Naive thymus-derived CD4-positive, alpha-beta T cell (primary cell): ENCODE measurements at regions of chr7 and their contacts with region 1.

Region 1: DNA sequence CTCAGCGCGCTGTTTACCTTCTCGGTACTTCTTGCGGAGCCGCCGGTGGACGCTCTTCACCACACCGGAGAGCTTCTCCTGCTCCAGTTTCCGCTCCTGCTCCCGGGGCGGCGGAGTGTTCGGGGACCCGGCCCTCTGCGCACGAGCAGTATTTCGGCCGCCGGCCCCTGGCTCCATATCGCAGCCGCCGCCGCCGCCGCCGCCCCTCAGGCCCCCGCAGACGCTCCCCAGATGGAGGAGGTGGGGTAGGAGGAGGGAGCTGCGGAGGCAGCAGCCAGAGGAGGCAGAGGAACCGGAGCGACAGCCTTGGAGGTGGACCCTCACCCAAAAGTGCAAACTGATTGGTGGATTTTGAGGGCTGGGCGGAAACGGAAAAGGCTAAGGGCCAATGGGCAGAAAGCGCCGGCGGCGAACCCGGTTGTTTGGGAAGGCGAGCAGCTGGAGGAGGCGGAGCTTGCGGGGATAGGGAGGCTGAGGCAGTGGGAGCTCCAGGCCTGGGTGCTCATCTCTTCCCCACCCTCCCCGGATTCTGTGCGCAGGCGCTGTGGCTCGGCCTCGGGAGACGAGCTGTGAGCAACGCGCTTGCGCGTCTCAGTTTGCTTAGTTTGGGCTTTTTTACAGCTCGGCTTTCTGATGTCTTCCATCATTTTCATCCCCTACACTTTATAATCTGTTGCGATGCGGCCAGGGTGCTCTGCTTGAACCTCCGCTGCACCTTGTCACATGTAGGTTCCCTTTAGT is 146.9 kb downstream of the GPR85 start:
- DNase-seq: peak; percentile 97 to 100 (median 99)
- ATAC-seq: peak; percentile 98
- H3K4me3 ChIP-seq: peak overlapping the region; percentile 84
- H3K4me3 Mint-ChIP-seq: peak overlapping the region; percentile 88 to 97 (median 95)
- H3K27ac ChIP-seq: peak overlapping the region; percentile 76
- H3K27ac Mint-ChIP-seq: peak overlapping the region; percentile 89 to 97 (median 94)
- H3K4me1 ChIP-seq: peaks cover 19 to 29% of the 10 kb centered on the region in 2 donors
- H3K4me1 Mint-ChIP-seq: peaks cover 22 to 57% (median 52%) of the 10 kb centered on the region in 7 donors
- H3K27me3 ChIP-seq: no peaks in the 10 kb centered on the region
- H3K27me3 Mint-ChIP-seq: peaks cover 0 to 4% (median 0%) of the 10 kb centered on the region in 5 donors

Region 2: DNA sequence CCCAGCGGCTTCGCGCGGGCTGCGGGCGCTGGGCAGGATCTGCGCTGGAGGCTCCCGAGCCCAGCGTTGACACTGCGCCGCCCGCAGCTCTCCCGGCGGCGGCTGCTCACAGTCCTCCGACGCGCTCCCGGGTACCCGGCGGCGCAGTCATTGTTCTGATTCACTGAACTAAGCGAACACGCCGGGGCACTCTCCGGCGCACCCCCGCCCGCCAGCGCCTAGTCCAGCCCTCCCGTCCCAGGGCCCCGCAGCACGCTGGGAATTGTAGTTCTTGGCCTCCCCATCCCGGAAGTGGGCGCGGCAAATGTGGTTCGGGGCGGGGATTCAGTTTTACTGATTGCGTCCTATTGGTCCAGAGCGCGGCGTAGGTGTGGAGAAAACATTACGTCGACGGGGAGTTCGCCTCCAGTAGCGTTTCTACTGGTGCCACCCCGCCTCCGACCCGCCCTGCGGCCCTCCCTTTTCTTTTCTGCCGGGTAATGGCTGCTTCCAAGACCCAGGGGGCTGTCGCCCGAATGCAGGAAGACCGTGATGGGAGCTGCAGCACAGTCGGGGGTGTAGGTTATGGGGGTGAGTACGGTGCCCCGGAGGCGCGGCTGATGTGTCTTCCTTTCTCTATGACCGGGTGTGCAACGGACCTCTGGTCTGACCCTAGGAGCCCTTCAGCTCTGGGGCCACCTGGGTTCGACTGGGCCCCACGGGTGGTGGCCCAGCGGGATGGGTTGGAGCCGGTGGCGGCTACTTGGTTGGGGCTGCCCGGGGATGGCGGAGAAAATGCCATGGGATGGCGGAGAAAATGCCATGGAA is 733.3 kb before region 1 on chr7 and contains the starts of genes DOCK4 and ZNF277:
- CTCF ChIA-PET with region 1: no interaction called
- POLR2A ChIA-PET with region 1: no interaction called
- intact Hi-C with region 1: loop called (anchors 1 kb)
- DNase-seq: peak; percentile 97 to 100 (median 99)
- ATAC-seq: peak; percentile 93
- H3K4me3 ChIP-seq: peak within 1 kb of the TSS; percentile 94
- H3K4me3 Mint-ChIP-seq: peak within 1 kb of the TSS; percentile 93 to 99 (median 96)
- H3K27ac ChIP-seq: peak within 1 kb of the TSS; percentile 71
- H3K27ac Mint-ChIP-seq: peak within 1 kb of the TSS; percentile 60 to 95 (median 85)
- H3K4me1 ChIP-seq: peaks cover 14 to 22% of the 10 kb centered on the region in 2 donors
- H3K4me1 Mint-ChIP-seq: peaks cover 25 to 57% (median 39%) of the 10 kb centered on the region in 7 donors
- H3K27me3 ChIP-seq: peaks cover 15% of the 10 kb centered on the region in 2 donors
- H3K27me3 Mint-ChIP-seq: peaks cover 25 to 36% (median 29%) of the 10 kb centered on the region in 5 donors
- total RNA-seq, gene DOCK4: 0.19 to 3.1 (median 2.4) TPM
- total RNA-seq, gene ZNF277: 19.5 to 38.8 (median 25.9) TPM

Region 3: GRCh38 chr7:112390167-112390566 is 549.6 kb before region 1 on chr7:
- CTCF ChIA-PET with region 1: no interaction called
- POLR2A ChIA-PET with region 1: no interaction called
- intact Hi-C with region 1: loop called in 1 of 2 experiments (anchors 5 kb)
- DNase-seq: no peak
- ATAC-seq: no peak
- H3K4me3 ChIP-seq: no peak overlapping the region
- H3K4me3 Mint-ChIP-seq: peak overlapping the region in 7 of 10 donors; percentile 23 to 87 (median 86)
- H3K27ac ChIP-seq: no peak overlapping the region
- H3K27ac Mint-ChIP-seq: peak overlapping the region in 2 of 9 donors; percentile 57 to 95
- H3K4me1 ChIP-seq: peaks cover 0 to 8% of the 10 kb centered on the region in 2 donors
- H3K4me1 Mint-ChIP-seq: peaks cover 9 to 28% (median 15%) of the 10 kb centered on the region in 7 donors
- H3K27me3 ChIP-seq: no peaks in the 10 kb centered on the region
- H3K27me3 Mint-ChIP-seq: peaks cover 0 to 39% (median 0%) of the 10 kb centered on the region in 5 donors

Region 4: DNA sequence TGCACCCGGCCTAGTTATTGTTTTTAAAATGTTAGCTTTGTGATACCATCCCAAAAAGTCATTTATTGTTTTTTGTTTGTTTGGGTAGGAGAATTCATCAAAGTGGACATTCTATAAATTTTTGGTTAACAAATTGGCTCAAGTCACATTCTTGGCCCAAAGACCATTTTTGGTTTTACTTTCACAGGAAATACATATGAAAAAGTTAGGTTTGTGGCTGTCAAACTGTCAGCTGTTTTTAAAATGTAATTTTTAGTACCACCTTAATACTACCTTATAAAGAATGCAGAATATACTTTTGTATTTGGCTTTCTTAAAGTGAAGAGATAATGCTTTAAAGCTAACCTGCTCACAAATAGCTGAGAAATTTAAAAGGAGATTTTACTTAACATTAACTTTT is 174.6 kb before region 1 on chr7:
- CTCF ChIA-PET with region 1: no interaction called
- POLR2A ChIA-PET with region 1: no interaction called
- intact Hi-C with region 1: loop called in 1 of 2 experiments (anchors 5 kb)
- DNase-seq: no peak
- ATAC-seq: no peak
- H3K4me3 ChIP-seq: no peak overlapping the region
- H3K4me3 Mint-ChIP-seq: no peak overlapping the region
- H3K27ac ChIP-seq: no peak overlapping the region
- H3K27ac Mint-ChIP-seq: no peak overlapping the region
- H3K4me1 ChIP-seq: peaks cover 0 to 3% of the 10 kb centered on the region in 2 donors
- H3K4me1 Mint-ChIP-seq: peaks cover 0 to 26% (median 18%) of the 10 kb centered on the region in 7 donors
- H3K27me3 ChIP-seq: no peaks in the 10 kb centered on the region
- H3K27me3 Mint-ChIP-seq: no peaks in the 10 kb centered on the region

Region 5: DNA sequence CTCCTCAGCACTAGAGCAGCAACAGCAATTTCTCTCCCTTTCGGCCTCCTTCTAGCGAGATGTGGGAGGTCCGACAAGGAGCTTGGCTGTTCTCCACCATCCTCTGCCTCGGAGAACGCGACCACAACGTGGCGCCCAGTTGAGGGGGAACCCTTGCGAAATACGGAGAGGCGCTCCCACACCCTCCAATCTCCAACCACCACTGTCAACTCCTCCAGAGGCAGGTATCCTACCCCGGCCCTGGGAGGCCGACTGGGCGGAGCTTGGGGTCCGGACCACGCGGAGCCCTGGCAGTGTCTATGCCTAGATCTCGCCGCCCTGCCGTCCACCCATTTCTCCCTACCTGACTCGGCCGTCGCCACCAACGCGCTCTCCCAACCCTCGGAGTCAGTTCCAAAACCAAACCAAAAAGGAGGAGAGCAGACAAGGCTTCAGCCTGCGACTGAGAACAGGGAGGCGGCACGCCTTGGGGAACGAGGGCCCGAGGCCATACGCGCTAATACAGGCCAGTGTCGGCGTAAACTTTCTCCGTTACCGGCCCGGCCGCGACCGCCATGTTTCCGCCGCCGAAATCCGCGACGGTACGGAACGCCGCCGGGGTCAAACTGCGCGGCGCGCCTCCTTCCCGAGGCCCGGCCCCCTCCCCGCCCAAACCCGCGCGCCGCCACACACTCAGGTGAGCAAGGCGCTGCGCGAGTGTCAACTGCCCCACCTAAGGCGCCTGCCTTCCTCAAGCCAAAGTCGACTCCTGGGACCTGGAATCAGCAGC is 149.7 kb before region 1 on chr7 and contains the start of gene TMEM168:
- CTCF ChIA-PET with region 1: no interaction called
- POLR2A ChIA-PET with region 1: interaction called, 9 read pairs
- intact Hi-C with region 1: loop called (anchors 1 kb)
- DNase-seq: peak; percentile 75 to 91 (median 83)
- ATAC-seq: peak; percentile 94
- H3K4me3 ChIP-seq: peak within 1 kb of the TSS; percentile 98
- H3K4me3 Mint-ChIP-seq: peak within 1 kb of the TSS; percentile 90 to 97 (median 95)
- H3K27ac ChIP-seq: peak within 1 kb of the TSS; percentile 85
- H3K27ac Mint-ChIP-seq: peak within 1 kb of the TSS; percentile 63 to 93 (median 88)
- H3K4me1 ChIP-seq: peaks cover 13 to 23% of the 10 kb centered on the region in 2 donors
- H3K4me1 Mint-ChIP-seq: peaks cover 27 to 50% (median 36%) of the 10 kb centered on the region in 7 donors
- H3K27me3 ChIP-seq: no peaks in the 10 kb centered on the region
- H3K27me3 Mint-ChIP-seq: no peaks in the 10 kb centered on the region
- total RNA-seq, gene TMEM168: 18.3 to 30.1 (median 20.7) TPM

Region 6: GRCh38 chr7:113118074-113118959 is 178.6 kb after region 1 on chr7 and contains the start of gene SMIM30:
- CTCF ChIA-PET with region 1: no interaction called
- POLR2A ChIA-PET with region 1: interaction called, 3 read pairs
- intact Hi-C with region 1: loop called (anchors 1 kb)
- DNase-seq: peak; percentile 59 to 90 (median 86)
- ATAC-seq: peak; percentile 100
- H3K4me3 ChIP-seq: peak within 1 kb of the TSS; percentile 75
- H3K4me3 Mint-ChIP-seq: peak within 1 kb of the TSS; percentile 81 to 99 (median 96)
- H3K27ac ChIP-seq: peak within 1 kb of the TSS; percentile 80
- H3K27ac Mint-ChIP-seq: peak within 1 kb of the TSS; percentile 82 to 99 (median 94)
- H3K4me1 ChIP-seq: peaks cover 0 to 6% of the 10 kb centered on the region in 2 donors
- H3K4me1 Mint-ChIP-seq: peaks cover 6 to 32% (median 22%) of the 10 kb centered on the region in 7 donors
- H3K27me3 ChIP-seq: no peaks in the 10 kb centered on the region
- H3K27me3 Mint-ChIP-seq: no peaks in the 10 kb centered on the region
- total RNA-seq, gene SMIM30: 9.3 to 21.0 (median 20.5) TPM